ENCODE measurements at regions of chr3 and their contacts with region 1.

Region 1: GRCh38 chr3:48273594-48274211 is 32.8 kb downstream of the ZNF589 start:
- DNase-seq: no peak
- H3K4me3 ChIP-seq: no peak overlapping the region
- H3K27ac ChIP-seq: no peak overlapping the region
- H3K4me1 ChIP-seq: peaks cover 0 to 6% (median 3%) of the 10 kb centered on the region in 4 donors
- H3K27me3 ChIP-seq: no peaks in the 10 kb centered on the region
- CTCF ChIP-seq: peak; percentile 74 to 84 (median 74)
- EP300 ChIP-seq: no peak
- POLR2A ChIP-seq: no peak

Region 2: GRCh38 chr3:48180531-48181253 is 93.0 kb before region 1 on chr3:
- intact Hi-C with region 1: no loop called
- DNase-seq: no peak
- H3K4me3 ChIP-seq: no peak overlapping the region
- H3K27ac ChIP-seq: no peak overlapping the region
- H3K4me1 ChIP-seq: no peaks in the 10 kb centered on the region
- H3K27me3 ChIP-seq: no peaks in the 10 kb centered on the region
- CTCF ChIP-seq: no peak
- EP300 ChIP-seq: no peak
- POLR2A ChIP-seq: no peak

Region 3: GRCh38 chr3:48222616-48223513 is 50.8 kb before region 1 on chr3 and contains the start of gene CAMP:
- intact Hi-C with region 1: no loop called
- DNase-seq: no peak
- H3K4me3 ChIP-seq: no peak within 1 kb of the TSS
- H3K27ac ChIP-seq: no peak within 1 kb of the TSS
- H3K4me1 ChIP-seq: peaks cover 0 to 6% (median 0%) of the 10 kb centered on the region in 4 donors
- H3K27me3 ChIP-seq: no peaks in the 10 kb centered on the region
- CTCF ChIP-seq: no peak
- EP300 ChIP-seq: no peak
- POLR2A ChIP-seq: no peak
- total RNA-seq, gene CAMP: 0.65 to 0.83 TPM in 2 of 4 donors, not detected in the others

Region 4: DNA sequence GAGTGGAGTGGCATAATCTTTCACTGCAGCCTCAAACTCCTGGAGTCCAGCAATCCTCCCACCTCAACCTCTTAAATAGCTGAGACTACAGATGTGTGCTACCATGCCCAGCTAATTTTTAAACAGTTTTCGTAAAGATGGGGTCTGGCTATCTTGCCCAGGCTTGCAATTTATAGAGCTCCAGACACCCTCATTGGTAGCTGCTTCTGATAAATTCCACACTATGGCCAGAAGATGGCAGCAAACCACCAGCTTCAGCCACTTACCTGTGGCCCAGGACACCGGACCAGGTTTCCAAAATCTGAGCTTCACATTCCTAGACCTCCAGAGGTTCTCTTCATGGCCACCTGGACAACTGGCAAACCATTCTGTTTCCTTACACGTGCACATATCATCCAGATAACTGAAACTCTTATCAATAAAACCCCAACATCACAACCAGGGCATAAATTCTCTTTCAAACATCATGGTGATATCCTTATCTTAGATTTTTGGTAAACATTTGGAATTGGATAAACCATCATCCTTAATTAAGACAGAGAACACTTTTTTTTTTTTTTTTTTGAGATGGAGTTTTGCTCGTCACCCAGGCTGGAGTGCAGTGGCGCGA is 127.2 kb after region 1 on chr3:
- intact Hi-C with region 1: loop called (anchors 10 kb)
- DNase-seq: no peak
- H3K4me3 ChIP-seq: no peak overlapping the region
- H3K27ac ChIP-seq: peak overlapping the region; percentile 84 to 96 (median 95)
- H3K4me1 ChIP-seq: peaks cover 14 to 51% (median 33%) of the 10 kb centered on the region in 4 donors
- H3K27me3 ChIP-seq: no peaks in the 10 kb centered on the region
- CTCF ChIP-seq: peak; percentile 79 to 98 (median 84)
- EP300 ChIP-seq: no peak
- POLR2A ChIP-seq: no peak

Measured in esophagus muscularis mucosa (tissue), 4 donors.